Activated CD4-positive, alpha-beta T cell treated with anti-CD3 and anti-CD28 coated beads for 36 hours (primary cell): ENCODE measurements at regions of chr22 and their contacts with region 1.

Region 1: GRCh38 chr22:45309472-45310227 is at the start of gene FAM118A:
- DNase-seq: peak; percentile 98
- ATAC-seq: peak; percentile 86
- H3K4me3 Mint-ChIP-seq: peak within 1 kb of the TSS; percentile 80
- H3K27ac Mint-ChIP-seq: peak within 1 kb of the TSS; percentile 97
- H3K4me1 Mint-ChIP-seq: peaks cover 46% of the 10 kb centered on the region
- H3K27me3 Mint-ChIP-seq: no peaks in the 10 kb centered on the region
- total RNA-seq, gene FAM118A: 25.5 to 29.0 TPM

Region 2: DNA sequence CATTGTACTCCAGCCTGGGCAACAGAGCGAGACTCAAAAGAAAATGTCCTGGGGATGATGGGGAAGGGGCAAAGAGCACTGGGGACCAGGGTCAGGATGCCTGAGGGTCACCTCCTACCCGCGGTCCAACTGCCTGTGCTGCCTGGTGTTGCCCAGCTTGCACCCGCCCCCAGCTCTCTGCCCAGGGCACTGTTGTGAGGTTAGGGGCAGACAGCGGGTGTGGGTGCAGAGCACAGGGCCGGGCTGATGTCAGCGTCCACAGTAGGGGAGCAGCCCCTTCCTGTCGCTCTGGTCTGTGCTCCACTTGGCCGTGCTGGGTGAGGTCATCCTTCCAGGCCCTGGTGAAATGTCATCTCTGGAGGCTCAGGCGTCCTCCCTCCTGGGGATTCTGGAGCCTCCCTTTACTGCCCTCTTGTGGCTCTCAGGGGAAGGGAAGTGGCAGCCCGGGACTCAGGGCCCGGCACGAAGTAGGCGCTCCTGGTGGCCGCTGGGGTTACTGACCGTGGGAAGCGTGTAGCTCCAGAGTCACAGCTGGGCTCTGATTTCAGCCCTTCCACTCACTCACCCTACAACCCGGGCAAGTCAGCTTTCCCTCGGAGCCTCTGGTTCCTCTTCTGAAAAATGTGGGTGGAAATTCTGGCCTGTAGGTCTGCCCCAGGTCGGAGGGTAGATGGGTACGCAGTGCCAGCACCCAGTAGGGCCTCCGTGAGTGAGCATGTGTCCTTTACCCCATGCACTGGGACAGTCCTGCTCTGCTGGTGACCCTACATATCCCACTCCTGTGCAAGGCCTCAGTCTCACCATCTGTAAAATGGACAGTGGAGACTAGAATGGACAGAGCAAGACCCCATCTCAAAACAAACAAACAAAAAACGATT is 624.9 kb before region 1 on chr22:
- CTCF ChIA-PET with region 1: no interaction called
- POLR2A ChIA-PET with region 1: no interaction called
- intact Hi-C with region 1: loop called in 1 of 2 experiments (anchors 10 kb)
- DNase-seq: peak; percentile 94
- ATAC-seq: peak; percentile 81
- H3K4me3 Mint-ChIP-seq: peak overlapping the region; percentile 15
- H3K27ac Mint-ChIP-seq: peak overlapping the region; percentile 87
- H3K4me1 Mint-ChIP-seq: peaks cover 52% of the 10 kb centered on the region
- H3K27me3 Mint-ChIP-seq: no peaks in the 10 kb centered on the region

Region 3: DNA sequence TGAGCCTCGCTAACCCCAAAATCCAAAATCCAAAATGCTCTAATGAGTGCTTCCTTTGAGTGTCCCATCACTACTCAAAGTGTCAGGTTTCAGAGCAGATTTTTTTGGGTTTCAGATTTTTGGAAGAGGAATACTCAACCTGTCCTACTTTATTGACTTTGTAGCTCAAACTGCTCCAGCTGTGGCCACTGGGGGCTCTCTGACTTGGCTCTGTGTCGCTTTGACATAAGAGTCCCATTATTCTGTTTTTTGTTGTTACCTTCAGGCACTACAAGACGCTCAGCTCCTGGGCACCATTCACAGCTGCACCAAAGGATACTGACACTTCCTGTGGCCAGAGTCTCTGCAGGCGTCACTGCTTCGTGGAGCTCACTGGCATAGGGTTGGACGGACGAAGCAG is 340.9 kb before region 1 on chr22:
- CTCF ChIA-PET with region 1: no interaction called
- POLR2A ChIA-PET with region 1: no interaction called
- intact Hi-C with region 1: no loop called
- DNase-seq: no peak
- ATAC-seq: no peak
- H3K4me3 Mint-ChIP-seq: no peak overlapping the region
- H3K27ac Mint-ChIP-seq: no peak overlapping the region
- H3K4me1 Mint-ChIP-seq: no peaks in the 10 kb centered on the region
- H3K27me3 Mint-ChIP-seq: peaks cover 8% of the 10 kb centered on the region

Region 4: DNA sequence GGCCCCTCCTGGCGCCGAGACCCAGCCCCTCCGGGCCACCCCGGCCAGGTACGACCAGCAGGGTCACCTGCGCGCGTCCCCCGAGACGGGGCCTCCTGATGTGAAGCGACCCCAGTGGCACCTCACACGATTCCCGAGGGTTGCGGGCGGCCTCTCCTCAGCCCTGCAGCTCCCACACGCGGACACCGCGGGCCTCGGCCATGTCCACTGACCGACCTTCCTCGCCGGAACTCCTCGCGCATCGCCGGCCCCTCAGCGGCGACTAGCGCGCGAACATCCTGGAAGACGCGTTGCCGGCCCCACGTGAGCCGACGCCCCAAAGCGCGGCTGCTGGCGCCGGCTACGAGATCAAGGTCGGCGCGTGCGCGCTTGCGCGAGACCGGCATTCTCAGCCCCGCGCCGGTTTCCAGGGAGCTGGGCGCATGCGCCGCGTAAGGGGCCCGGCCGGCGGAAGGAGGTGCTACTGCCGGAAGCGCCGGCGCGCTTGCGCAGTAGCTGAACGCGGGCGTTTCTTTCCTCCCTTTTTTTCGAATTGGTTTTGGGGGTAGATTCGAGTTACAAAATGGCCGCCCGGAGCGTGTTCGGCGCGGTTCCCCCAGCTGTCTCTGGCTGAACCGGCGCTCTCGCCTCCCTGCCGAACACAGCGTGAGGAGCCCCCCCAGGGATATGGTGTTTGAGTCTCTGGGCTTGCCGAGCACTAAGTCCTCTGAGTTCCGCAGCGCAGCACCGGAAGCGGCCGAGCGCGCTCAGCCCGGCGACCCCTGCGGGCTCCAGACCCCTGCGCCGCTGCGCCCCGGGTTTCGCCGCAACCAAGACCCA is 146.0 kb before region 1 on chr22 and contains the start of gene NUP50:
- CTCF ChIA-PET with region 1: no interaction called
- POLR2A ChIA-PET with region 1: no interaction called
- intact Hi-C with region 1: loop called (anchors 2 to 10 kb)
- DNase-seq: peak; percentile 98
- ATAC-seq: peak; percentile 89
- H3K4me3 Mint-ChIP-seq: peak within 1 kb of the TSS; percentile 99
- H3K27ac Mint-ChIP-seq: peak within 1 kb of the TSS; percentile 97
- H3K4me1 Mint-ChIP-seq: peaks cover 56% of the 10 kb centered on the region
- H3K27me3 Mint-ChIP-seq: no peaks in the 10 kb centered on the region
- total RNA-seq, gene NUP50: 136 to 141 TPM

Region 5: DNA sequence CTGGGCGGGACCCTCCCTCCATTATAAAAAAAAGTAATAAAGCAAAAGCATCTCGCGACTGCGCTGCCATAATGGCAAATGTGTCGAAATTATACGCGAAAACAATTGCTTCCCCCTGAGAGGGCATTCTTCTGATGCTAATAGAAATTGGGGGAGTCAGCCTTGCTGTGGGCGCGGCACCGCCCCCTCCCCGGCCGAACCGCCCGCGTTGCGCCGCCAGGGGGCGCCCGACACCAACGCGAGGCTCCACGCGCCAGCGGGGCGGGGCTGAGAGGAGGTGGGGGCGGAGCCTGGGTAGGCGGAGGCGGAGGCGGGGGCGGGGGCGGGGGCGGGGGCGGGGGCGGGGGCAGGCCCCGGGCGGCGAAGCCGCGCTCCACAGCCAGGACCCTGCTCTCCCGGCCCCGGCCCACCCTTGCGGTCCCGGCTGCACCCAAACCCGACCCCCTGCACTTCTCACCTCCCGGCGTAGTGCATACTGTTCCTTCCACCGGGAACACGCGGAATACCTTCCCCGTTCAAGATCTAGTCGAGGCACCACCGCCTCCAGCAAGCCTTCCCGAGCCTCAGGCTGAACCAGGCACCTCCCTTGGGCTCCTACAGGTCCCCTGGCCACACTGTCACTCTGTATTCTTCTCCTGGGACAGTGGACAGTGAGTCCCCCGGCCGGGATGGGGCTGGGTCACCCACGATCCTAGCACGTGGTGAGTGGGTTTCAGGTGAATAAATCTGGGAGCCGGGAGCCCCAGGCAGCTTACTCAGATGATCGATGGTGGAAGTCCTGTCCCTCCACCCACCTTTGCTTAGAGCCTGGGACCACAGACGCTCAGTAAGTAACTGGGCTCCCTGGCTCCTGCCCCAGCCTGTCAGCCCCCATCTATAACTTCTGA is 40.4 kb before region 1 on chr22:
- CTCF ChIA-PET with region 1: no interaction called
- POLR2A ChIA-PET with region 1: no interaction called
- intact Hi-C with region 1: loop called in 1 of 2 experiments (anchors 1 kb)
- DNase-seq: peak; percentile 90
- ATAC-seq: peak; percentile 87
- H3K4me3 Mint-ChIP-seq: peak overlapping the region; percentile 67
- H3K27ac Mint-ChIP-seq: no peak overlapping the region
- H3K4me1 Mint-ChIP-seq: peaks cover 9% of the 10 kb centered on the region
- H3K27me3 Mint-ChIP-seq: peaks cover 10% of the 10 kb centered on the region

Region 6: DNA sequence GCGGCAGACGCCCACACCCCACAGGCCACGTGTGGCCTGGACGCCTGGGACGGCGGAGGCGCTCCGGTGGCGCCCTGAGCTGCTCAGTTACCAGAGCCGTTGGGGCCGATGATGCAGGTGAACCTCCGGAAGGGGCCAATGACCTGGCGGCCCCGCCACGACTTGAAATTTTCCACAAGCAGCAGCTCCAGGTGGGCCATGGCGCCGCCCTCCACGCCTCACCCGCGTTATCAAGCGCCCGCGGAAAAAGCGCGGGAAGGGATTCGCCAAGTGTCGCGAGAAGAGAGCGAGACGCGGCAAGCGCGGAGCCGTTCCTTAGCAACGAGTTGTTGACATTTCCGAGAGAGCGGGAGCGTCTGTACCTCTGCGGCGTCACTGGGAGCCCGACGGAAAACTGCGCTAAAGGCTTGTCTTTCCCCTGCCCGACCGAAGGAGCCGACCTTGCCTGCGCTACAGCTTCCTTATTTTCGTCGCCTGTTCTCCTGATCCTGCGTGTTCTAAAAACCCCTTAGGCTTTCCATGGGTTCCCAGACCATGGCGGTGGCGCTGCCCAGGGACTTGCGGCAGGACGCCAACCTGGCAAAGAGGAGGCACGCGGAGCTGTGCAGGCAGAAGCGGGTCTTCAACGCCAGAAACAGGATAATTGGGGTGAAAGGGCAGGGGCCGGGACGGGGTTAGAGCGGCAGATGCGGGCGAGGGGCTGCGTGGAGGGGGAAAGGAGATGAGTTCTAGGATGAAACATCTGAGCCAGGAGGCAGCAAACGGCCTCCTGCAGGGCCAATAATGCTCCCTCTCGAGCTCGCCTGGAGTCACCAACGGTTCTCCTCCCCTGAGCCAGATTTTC is 103.9 kb after region 1 on chr22 and contains the starts of genes RIBC2 and SMC1B:
- CTCF ChIA-PET with region 1: no interaction called
- POLR2A ChIA-PET with region 1: no interaction called
- intact Hi-C with region 1: loop called in 1 of 2 experiments (anchors 1 kb)
- DNase-seq: peak; percentile 93
- ATAC-seq: peak; percentile 96
- H3K4me3 Mint-ChIP-seq: peak within 1 kb of the TSS; percentile 78
- H3K27ac Mint-ChIP-seq: peak within 1 kb of the TSS; percentile 75
- H3K4me1 Mint-ChIP-seq: peaks cover 10% of the 10 kb centered on the region
- H3K27me3 Mint-ChIP-seq: peaks cover 8% of the 10 kb centered on the region
- total RNA-seq, gene RIBC2: 6.3 to 7.8 TPM
- total RNA-seq, gene SMC1B: 0.62 to 0.67 TPM